ENCODE measurements at regions of chr4 and their contacts with region 1.

Region 1: GRCh38 chr4:83284193-83285054 is at the start of gene COQ2:
- DNase-seq: peak; percentile 94
- H3K4me3 Mint-ChIP-seq: peak within 1 kb of the TSS; percentile 86
- H3K27ac Mint-ChIP-seq: peak within 1 kb of the TSS; percentile 97
- H3K4me1 Mint-ChIP-seq: peaks cover 24% of the 10 kb centered on the region
- H3K27me3 Mint-ChIP-seq: no peaks in the 10 kb centered on the region
- CTCF ChIP-seq: no peak
- total RNA-seq, gene COQ2: 18.0 and 27.8 TPM in 2 replicates

Region 2: GRCh38 chr4:82462415-82462831 is 822.0 kb before region 1 on chr4:
- CTCF ChIA-PET with region 1: no interaction called
- POLR2A ChIA-PET with region 1: no interaction called
- intact Hi-C with region 1: loop called (anchors 10 kb)
- DNase-seq: peak; percentile 90
- H3K4me3 Mint-ChIP-seq: no peak overlapping the region
- H3K27ac Mint-ChIP-seq: no peak overlapping the region
- H3K4me1 Mint-ChIP-seq: peaks cover 6% of the 10 kb centered on the region
- H3K27me3 Mint-ChIP-seq: no peaks in the 10 kb centered on the region
- CTCF ChIP-seq: peak; percentile 86

Region 3: GRCh38 chr4:83012687-83013419 is 271.6 kb before region 1 on chr4:
- CTCF ChIA-PET with region 1: interaction called, 4 read pairs
- POLR2A ChIA-PET with region 1: interaction called, 14 read pairs
- intact Hi-C with region 1: no loop called
- DNase-seq: peak; percentile 98
- H3K4me3 Mint-ChIP-seq: peak overlapping the region; percentile 92
- H3K27ac Mint-ChIP-seq: peak overlapping the region; percentile 96
- H3K4me1 Mint-ChIP-seq: peaks cover 34% of the 10 kb centered on the region
- H3K27me3 Mint-ChIP-seq: no peaks in the 10 kb centered on the region
- CTCF ChIP-seq: peak; percentile 35

Region 4: GRCh38 chr4:83054928-83055327 is 229.5 kb before region 1 on chr4:
- CTCF ChIA-PET with region 1: interaction called, 48 read pairs
- POLR2A ChIA-PET with region 1: interaction called, 5 read pairs
- intact Hi-C with region 1: loop called (anchors 1 kb)
- DNase-seq: peak; percentile 45
- H3K4me3 Mint-ChIP-seq: no peak overlapping the region
- H3K27ac Mint-ChIP-seq: no peak overlapping the region
- H3K4me1 Mint-ChIP-seq: no peaks in the 10 kb centered on the region
- H3K27me3 Mint-ChIP-seq: no peaks in the 10 kb centered on the region
- CTCF ChIP-seq: peak; percentile 34

Region 5: DNA sequence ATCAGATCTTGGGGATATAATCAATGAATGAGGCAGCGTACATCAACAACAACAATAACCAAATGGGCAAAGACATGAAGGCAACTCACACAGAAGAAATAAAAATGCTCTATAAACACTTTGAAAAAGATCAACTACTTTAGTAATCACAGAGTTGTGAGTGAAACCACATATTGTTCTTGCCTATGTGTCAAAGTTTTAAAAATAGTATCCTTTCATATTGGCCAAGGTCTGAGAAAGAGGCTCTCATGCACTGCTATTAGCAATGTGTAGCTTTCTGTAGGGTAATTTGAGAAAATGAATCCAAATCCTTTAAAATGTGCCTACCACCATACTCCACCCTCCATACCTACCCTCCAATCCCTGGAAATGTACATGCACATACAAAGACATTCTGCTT is 24.8 kb before region 1 on chr4:
- CTCF ChIA-PET with region 1: interaction called, 8 read pairs
- POLR2A ChIA-PET with region 1: interaction called, 3 read pairs
- intact Hi-C with region 1: loop called (anchors 2 kb)
- DNase-seq: no peak
- H3K4me3 Mint-ChIP-seq: no peak overlapping the region
- H3K27ac Mint-ChIP-seq: no peak overlapping the region
- H3K4me1 Mint-ChIP-seq: peaks cover 13% of the 10 kb centered on the region
- H3K27me3 Mint-ChIP-seq: no peaks in the 10 kb centered on the region
- CTCF ChIP-seq: no peak

Region 6: DNA sequence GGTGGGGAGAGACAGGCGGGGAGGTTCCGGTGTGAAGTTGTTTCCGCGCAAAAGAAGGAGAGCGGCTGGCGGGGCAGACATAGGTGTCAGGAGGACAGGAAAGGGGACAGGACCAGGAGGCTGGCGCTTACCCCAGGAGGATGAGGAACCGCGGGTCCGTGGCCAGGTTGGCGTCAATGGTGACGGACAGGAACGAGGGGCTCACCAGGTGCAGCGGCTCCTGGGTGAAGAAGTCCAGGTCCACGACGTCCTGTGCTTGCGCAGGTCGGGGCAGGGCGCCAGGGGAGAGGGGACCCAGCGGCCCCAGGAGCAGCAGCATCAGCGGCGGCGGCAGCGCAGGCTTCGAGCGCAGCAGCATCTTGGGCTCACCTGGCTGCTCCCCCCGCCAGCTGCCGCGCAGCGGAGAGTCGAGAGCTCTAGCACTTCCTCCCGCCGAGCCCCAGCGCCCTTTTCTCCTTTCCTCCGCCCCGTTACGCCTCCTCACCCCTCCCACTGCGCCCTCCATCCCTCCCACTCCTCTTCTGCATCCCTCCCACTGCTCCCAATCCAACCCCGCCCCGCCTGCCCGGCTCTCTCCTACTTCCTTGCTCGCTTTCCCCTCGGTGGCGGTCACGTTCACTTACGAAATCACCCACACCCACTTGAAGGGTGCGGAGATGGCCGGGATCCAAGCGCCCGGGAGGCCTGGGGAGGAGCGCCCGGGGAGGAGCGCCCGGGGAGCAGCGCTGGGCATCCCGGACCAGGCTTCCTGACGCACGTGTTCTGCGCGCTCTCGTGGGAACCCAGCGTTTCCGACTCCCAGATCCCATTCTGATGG is 50.2 kb after region 1 on chr4 and contains the start of gene HPSE:
- CTCF ChIA-PET with region 1: interaction called, 4 read pairs
- POLR2A ChIA-PET with region 1: interaction called, 12 read pairs
- intact Hi-C with region 1: no loop called
- DNase-seq: peak; percentile 92
- H3K4me3 Mint-ChIP-seq: peak within 1 kb of the TSS; percentile 81
- H3K27ac Mint-ChIP-seq: peak within 1 kb of the TSS; percentile 47
- H3K4me1 Mint-ChIP-seq: peaks cover 15% of the 10 kb centered on the region
- H3K27me3 Mint-ChIP-seq: no peaks in the 10 kb centered on the region
- CTCF ChIP-seq: no peak
- total RNA-seq, gene HPSE: 5.5 and 6.0 TPM in 2 replicates

Region 7: DNA sequence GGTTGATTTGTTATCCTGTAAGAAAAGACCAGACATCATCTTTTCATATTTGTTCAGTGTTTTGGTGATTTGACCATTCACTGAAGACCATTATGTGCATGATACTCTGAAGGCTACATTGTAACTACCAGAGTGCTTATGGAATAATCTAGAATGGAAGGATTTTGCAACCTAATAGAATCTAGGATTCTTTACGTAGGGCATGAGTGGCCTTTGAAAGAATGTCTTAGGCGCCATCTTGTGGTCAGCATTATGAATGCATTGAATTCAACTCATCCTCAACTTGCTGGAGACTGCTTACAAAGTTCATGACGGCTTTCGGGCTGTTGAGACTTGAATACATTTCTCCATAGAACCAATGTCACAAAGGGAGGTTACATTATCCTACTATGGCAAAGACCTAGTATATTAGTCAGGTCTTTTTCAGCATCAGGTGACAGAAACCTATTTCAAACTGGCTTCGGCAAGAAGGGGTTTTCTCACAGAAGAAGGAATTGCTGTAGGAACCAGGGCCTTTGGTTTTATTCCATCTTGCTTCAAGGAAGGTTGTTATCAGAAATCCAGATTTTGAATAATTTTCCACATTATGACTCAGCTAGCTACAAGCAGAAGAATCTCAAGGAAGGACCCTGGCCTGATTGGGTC is 355.5 kb after region 1 on chr4:
- CTCF ChIA-PET with region 1: no interaction called
- POLR2A ChIA-PET with region 1: no interaction called
- intact Hi-C with region 1: loop called (anchors 2 kb)
- DNase-seq: peak; percentile 83
- H3K4me3 Mint-ChIP-seq: no peak overlapping the region
- H3K27ac Mint-ChIP-seq: no peak overlapping the region
- H3K4me1 Mint-ChIP-seq: peaks cover 5% of the 10 kb centered on the region
- H3K27me3 Mint-ChIP-seq: peaks cover 39% of the 10 kb centered on the region
- CTCF ChIP-seq: peak; percentile 85